PC-9 (cell line): ENCODE measurements at regions of chr5 and their contacts with region 1.

Region 1: DNA sequence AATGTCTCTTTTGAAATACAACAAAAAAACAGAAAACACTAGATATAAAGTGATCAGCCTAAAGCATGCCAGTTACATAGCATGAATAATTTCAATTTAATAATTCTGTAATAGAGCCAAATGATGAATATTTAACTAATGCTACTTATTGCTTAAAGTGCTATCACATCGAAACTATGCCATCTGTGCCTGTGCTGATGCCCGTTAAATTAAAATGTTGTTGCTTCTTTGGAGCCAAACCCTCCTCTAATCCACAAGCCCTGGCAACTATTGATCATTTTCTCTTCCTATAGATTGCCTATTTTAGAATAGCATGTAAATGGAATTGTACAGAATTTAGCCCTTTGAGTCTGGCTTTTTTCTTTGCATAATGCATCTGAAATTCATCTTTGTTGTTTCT is 356.2 kb downstream of the CHSY3 start:
- DNase-seq: no peak
- H3K4me3 ChIP-seq: no peak overlapping the region
- H3K27ac ChIP-seq: no peak overlapping the region
- H3K4me1 ChIP-seq: no peaks in the 10 kb centered on the region
- H3K27me3 ChIP-seq: no peaks in the 10 kb centered on the region
- CTCF ChIP-seq: no peak

Region 2: GRCh38 chr5:130141659-130142320 is 118.7 kb before region 1 on chr5:
- CTCF ChIA-PET with region 1: no interaction called
- POLR2A ChIA-PET with region 1: no interaction called
- intact Hi-C with region 1: no loop called
- DNase-seq: peak in 1 of 2 experiments; percentile 16
- H3K4me3 ChIP-seq: no peak overlapping the region
- H3K27ac ChIP-seq: no peak overlapping the region
- H3K4me1 ChIP-seq: no peaks in the 10 kb centered on the region
- H3K27me3 ChIP-seq: no peaks in the 10 kb centered on the region
- CTCF ChIP-seq: peak; percentile 59

Region 3: GRCh38 chr5:131005963-131006684 is 745.6 kb after region 1 on chr5:
- CTCF ChIA-PET with region 1: interaction called, 13 read pairs
- POLR2A ChIA-PET with region 1: no interaction called
- intact Hi-C with region 1: no loop called
- DNase-seq: no peak
- H3K4me3 ChIP-seq: no peak overlapping the region
- H3K27ac ChIP-seq: no peak overlapping the region
- H3K4me1 ChIP-seq: no peaks in the 10 kb centered on the region
- H3K27me3 ChIP-seq: no peaks in the 10 kb centered on the region
- CTCF ChIP-seq: no peak; the same call in 1 of the 2 replicates